ENCODE measurements at regions of chr18 and their contacts with region 1.

Region 1: DNA sequence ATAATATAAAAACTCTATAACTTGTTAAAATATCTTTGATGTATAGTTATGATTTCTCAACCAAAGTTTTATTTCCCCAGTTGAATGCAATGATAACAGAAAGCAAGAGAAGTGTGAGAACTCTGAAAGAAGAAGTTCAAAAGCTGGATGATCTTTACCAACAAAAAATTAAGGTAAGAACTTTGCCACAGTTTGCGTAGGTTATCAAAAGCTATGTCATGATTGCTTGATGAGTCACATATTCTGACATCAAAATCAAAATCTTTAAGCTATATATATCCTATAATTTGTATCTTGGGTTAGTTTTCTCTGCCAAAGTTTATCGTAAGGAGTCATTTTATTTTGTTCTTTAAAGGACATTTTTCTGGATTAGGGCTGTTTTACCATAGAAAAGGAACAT is 35.0 kb downstream of the NDC80 start:
- DNase-seq: no peak
- ATAC-seq: no peak
- H3K4me3 Mint-ChIP-seq: peak overlapping the region; percentile 54
- H3K27ac Mint-ChIP-seq: peak overlapping the region; percentile 78
- H3K4me1 Mint-ChIP-seq: peaks cover 44% of the 10 kb centered on the region
- H3K27me3 Mint-ChIP-seq: no peaks in the 10 kb centered on the region

Region 2: GRCh38 chr18:2395427-2396161 is 210.7 kb before region 1 on chr18:
- CTCF ChIA-PET with region 1: no interaction called
- POLR2A ChIA-PET with region 1: no interaction called
- DNase-seq: no peak
- ATAC-seq: no peak
- H3K4me3 Mint-ChIP-seq: no peak overlapping the region
- H3K27ac Mint-ChIP-seq: no peak overlapping the region
- H3K4me1 Mint-ChIP-seq: no peaks in the 10 kb centered on the region
- H3K27me3 Mint-ChIP-seq: peaks cover 2% of the 10 kb centered on the region

Region 3: DNA sequence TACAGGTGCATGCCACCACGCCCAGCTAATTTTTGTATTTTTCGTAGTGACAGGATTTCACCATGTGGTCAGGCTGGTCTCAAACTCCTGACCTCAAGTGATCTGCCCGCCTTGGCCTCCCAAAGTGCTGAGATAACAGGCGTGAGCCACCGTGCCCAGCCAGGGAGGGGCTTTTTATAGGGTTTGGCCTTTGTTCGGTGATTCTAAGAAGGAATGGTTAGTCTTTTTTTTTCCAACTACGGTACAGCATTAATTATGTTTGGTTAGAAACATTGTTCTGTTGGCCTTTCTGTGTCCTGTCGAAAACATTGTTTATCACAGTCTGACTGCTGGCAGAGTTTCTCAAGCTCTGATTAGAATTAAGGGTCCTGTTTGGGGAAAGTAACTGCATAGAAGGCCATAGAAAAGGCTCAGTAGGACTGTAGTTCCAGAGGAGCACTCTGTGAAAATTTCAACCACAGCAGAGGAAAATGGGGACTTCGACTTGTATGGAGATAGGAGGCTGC is 29.8 kb after region 1 on chr18:
- CTCF ChIA-PET with region 1: interaction called, 7 read pairs
- POLR2A ChIA-PET with region 1: interaction called, 26 read pairs
- DNase-seq: no peak
- ATAC-seq: peak; percentile 36
- H3K4me3 Mint-ChIP-seq: peak overlapping the region; percentile 70
- H3K27ac Mint-ChIP-seq: peak overlapping the region; percentile 100
- H3K4me1 Mint-ChIP-seq: peaks cover 69% of the 10 kb centered on the region
- H3K27me3 Mint-ChIP-seq: no peaks in the 10 kb centered on the region

Region 4: DNA sequence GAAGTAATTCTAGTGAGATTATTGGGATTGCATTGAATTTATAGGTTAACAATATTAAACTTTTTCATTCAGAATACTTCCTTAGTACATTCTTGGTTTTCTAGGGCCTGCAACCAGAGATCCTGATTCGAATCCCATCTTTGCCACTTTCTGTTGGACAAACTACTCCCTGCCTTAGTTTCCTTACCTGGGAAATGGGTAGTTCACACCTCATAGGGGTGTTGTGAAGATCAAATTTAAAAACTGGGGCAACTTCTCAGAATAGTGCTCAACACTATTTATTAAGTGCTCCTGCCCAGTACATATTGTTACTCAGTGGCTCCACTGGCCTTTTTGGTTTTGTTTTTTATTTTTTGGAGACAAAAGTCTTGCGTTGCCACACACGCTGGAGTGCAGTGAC is 92.7 kb after region 1 on chr18:
- CTCF ChIA-PET with region 1: no interaction called
- POLR2A ChIA-PET with region 1: no interaction called
- DNase-seq: no peak
- ATAC-seq: no peak
- H3K4me3 Mint-ChIP-seq: no peak overlapping the region
- H3K27ac Mint-ChIP-seq: peak overlapping the region; percentile 43
- H3K4me1 Mint-ChIP-seq: peaks cover 8% of the 10 kb centered on the region
- H3K27me3 Mint-ChIP-seq: no peaks in the 10 kb centered on the region

Measured in activated CD8-positive, alpha-beta T cell treated with anti-CD3 and anti-CD28 coated beads, Interleukin-2, amount 10 ng/mL, durations not matched to agents 7 days and 5 days (primary cell).